Activated CD4-positive, alpha-beta memory T cell treated with anti-CD3 and anti-CD28 coated beads for 36 hours (primary cell): ENCODE measurements at regions of chr1 and their contacts with region 1.

Region 1: GRCh38 chr1:67285780-67286488 is 21.7 kb upstream of the IL12RB2 start:
- DNase-seq: no peak
- H3K4me3 Mint-ChIP-seq: no peak overlapping the region
- H3K27ac Mint-ChIP-seq: peak overlapping the region; percentile 41
- H3K4me1 Mint-ChIP-seq: peaks cover 26% of the 10 kb centered on the region
- H3K27me3 Mint-ChIP-seq: peaks cover 2% of the 10 kb centered on the region

Region 2: GRCh38 chr1:67314696-67315095 is 28.8 kb after region 1 on chr1:
- CTCF ChIA-PET with region 1: no interaction called
- POLR2A ChIA-PET with region 1: no interaction called
- intact Hi-C with region 1: loop called (anchors 1 kb)
- DNase-seq: peak; percentile 53
- H3K4me3 Mint-ChIP-seq: peak overlapping the region; percentile 56
- H3K27ac Mint-ChIP-seq: peak overlapping the region; percentile 96
- H3K4me1 Mint-ChIP-seq: peaks cover 48% of the 10 kb centered on the region
- H3K27me3 Mint-ChIP-seq: no peaks in the 10 kb centered on the region